ENCODE measurements at regions of chr1 and their contacts with region 1.

Region 1: GRCh38 chr1:244751271-244751895 is 84.1 kb upstream of the COX20 start:
- DNase-seq: no peak
- H3K4me3 ChIP-seq: no peak overlapping the region
- H3K27ac ChIP-seq: no peak overlapping the region
- H3K4me1 ChIP-seq: no peaks in the 10 kb centered on the region
- H3K27me3 ChIP-seq: no peaks in the 10 kb centered on the region
- CTCF ChIP-seq: no peak

Region 2: DNA sequence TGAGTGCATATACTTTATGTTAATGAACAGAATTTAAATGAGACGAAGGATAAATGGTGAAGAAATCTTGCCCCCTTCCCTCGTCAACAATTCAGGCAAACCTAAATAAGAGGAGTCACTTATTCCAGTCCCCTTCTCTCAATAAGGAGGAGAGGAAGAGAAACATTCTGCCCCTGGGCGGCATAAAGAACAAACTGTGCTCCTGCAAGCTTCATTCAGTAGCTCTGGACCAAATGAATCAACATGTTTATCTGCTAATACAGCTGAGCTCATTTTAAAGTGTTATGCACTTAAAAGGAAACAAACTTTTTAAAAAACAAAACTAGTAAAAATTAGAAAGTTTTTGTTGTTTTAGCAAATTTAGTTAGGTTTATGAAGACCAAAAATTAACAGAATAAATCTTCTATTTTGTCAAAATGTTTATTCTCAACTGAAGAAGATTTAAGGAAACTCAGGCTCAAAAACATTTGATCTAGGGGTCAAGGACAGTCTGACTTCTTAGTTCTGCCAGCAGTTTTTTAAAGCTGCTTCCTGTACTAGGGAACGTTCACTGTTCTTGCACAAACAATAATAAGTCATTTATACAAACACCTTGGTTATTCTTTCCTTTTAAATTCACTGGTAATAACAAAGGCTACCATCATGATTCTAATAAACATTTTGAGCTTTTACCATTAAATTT is 959.7 kb before region 1 on chr1:
- CTCF ChIA-PET with region 1: no interaction called
- POLR2A ChIA-PET with region 1: no interaction called
- intact Hi-C with region 1: no loop called
- DNase-seq: no peak
- H3K4me3 ChIP-seq: no peak overlapping the region
- H3K27ac ChIP-seq: no peak overlapping the region
- H3K4me1 ChIP-seq: peaks cover 29% of the 10 kb centered on the region
- H3K27me3 ChIP-seq: no peaks in the 10 kb centered on the region
- CTCF ChIP-seq: no peak

Region 3: GRCh38 chr1:244768186-244768585 is 16.8 kb after region 1 on chr1:
- CTCF ChIA-PET with region 1: no interaction called
- POLR2A ChIA-PET with region 1: interaction called, 11 read pairs
- intact Hi-C with region 1: no loop called
- DNase-seq: no peak
- H3K4me3 ChIP-seq: no peak overlapping the region
- H3K27ac ChIP-seq: no peak overlapping the region
- H3K4me1 ChIP-seq: no peaks in the 10 kb centered on the region
- H3K27me3 ChIP-seq: no peaks in the 10 kb centered on the region
- CTCF ChIP-seq: no peak

Region 4: GRCh38 chr1:244788493-244789275 is 37.3 kb after region 1 on chr1:
- CTCF ChIA-PET with region 1: no interaction called
- POLR2A ChIA-PET with region 1: no interaction called
- intact Hi-C with region 1: no loop called
- DNase-seq: no peak
- H3K4me3 ChIP-seq: no peak overlapping the region
- H3K27ac ChIP-seq: no peak overlapping the region
- H3K4me1 ChIP-seq: no peaks in the 10 kb centered on the region
- H3K27me3 ChIP-seq: 0 out of 2 replicates have a peak, but pooled peaks cover 4% of the 10 kb centered on the region
- CTCF ChIP-seq: no peak